ENCODE measurements at regions of chr12 and their contacts with region 1.

Region 1: DNA sequence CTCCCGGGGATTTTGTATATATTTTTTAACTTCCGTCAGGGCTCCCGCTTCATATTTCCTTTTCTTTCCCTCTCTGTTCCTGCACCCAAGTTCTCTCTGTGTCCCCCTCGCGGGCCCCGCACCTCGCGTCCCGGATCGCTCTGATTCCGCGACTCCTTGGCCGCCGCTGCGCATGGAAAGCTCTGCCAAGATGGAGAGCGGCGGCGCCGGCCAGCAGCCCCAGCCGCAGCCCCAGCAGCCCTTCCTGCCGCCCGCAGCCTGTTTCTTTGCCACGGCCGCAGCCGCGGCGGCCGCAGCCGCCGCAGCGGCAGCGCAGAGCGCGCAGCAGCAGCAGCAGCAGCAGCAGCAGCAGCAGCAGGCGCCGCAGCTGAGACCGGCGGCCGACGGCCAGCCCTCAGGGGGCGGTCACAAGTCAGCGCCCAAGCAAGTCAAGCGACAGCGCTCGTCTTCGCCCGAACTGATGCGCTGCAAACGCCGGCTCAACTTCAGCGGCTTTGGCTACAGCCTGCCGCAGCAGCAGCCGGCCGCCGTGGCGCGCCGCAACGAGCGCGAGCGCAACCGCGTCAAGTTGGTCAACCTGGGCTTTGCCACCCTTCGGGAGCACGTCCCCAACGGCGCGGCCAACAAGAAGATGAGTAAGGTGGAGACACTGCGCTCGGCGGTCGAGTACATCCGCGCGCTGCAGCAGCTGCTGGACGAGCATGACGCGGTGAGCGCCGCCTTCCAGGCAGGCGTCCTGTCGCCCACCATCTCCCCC is 777 bp downstream of the ASCL1 start:
- DNase-seq: no peak
- H3K4me3 ChIP-seq: no peak overlapping the region
- CTCF ChIP-seq: no peak
- POLR2A ChIP-seq: no peak

Region 2: DNA sequence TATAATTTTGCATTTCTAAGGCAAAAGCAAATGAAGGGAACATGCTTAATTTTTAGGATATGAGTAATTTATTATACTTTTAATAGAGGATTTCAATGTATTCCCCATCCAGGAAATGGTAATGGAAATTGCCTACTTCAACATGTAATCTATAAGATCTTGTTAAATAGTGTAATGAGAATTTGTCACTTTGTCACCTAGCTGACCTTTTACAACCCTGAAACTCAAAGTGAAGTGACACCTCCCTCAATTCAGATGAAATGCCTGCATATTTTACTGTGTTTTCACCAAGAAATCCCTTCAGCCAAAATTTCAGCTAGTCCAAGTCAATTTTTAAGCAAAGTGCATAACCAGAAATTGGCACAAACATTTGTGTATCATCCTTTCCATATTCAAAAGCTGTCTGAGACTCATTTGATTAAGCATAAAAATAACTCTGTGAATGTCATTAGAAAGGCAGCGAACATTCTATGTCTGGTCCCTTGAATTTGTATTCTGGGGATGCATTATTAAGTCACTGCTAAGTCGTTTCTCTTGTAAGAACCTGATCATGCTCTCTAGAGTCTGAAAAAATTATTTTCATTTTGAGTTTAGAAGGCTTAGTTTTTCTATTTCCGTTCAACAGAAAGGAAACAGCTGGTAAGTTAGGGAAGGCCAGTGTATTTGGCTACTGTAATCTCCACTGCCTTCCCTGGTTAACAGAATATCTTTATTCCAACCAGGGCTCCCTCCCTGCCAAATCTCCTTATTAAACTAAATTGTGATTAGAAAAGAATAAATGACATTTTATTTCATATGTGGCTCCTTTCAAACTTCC is 578.7 kb before region 1 on chr12:
- intact Hi-C with region 1: loop called (anchors 10 kb)
- DNase-seq: no peak
- H3K4me3 ChIP-seq: no peak overlapping the region
- CTCF ChIP-seq: no peak
- POLR2A ChIP-seq: no peak

Region 3: GRCh38 chr12:103140286-103140685 is 182.0 kb after region 1 on chr12:
- intact Hi-C with region 1: no loop called
- DNase-seq: no peak
- H3K4me3 ChIP-seq: no peak overlapping the region
- CTCF ChIP-seq: no peak
- POLR2A ChIP-seq: no peak

Measured in lower leg skin (tissue), 4 donors.